AG04450 (cell line): ENCODE measurements at regions of chrX and their contacts with region 1.

Region 1: GRCh38 chrX:41180194-41180908 is 95.1 kb downstream of the USP9X start:
- DNase-seq: peak; percentile 10
- H3K4me3 ChIP-seq: no peak overlapping the region
- H3K27ac ChIP-seq: no peak overlapping the region
- H3K27me3 ChIP-seq: no peaks in the 10 kb centered on the region
- CTCF ChIP-seq: peak; percentile 67

Region 2: DNA sequence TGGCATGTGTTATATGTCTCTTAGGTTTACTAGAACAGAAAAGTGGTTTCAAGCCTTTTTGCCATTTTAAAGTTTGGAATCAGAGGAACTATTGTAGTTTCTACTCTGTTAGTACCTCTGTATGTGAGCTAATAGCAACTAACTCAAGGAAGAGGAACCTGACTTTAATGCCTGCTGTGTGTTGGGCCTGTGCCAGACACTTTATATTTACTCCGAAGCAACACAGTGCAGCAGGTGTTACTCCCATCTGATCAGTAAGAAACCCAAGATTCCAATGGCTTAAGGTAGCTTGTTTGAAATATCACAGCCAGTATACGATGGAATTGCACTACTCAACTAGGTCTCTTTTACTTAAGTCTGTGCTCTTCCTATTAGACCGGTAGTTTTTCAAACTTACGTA is 15.9 kb before region 1 on chrX:
- CTCF ChIA-PET with region 1: interaction called, 40 read pairs
- POLR2A ChIA-PET with region 1: no interaction called
- DNase-seq: no peak
- H3K4me3 ChIP-seq: no peak overlapping the region
- H3K27ac ChIP-seq: no peak overlapping the region
- H3K27me3 ChIP-seq: no peaks in the 10 kb centered on the region
- CTCF ChIP-seq: no peak

Region 3: GRCh38 chrX:41198406-41198805 is 18.1 kb after region 1 on chrX:
- CTCF ChIA-PET with region 1: interaction called, 11 read pairs
- POLR2A ChIA-PET with region 1: no interaction called
- DNase-seq: no peak
- H3K4me3 ChIP-seq: no peak overlapping the region
- H3K27ac ChIP-seq: no peak overlapping the region
- H3K27me3 ChIP-seq: no peaks in the 10 kb centered on the region
- CTCF ChIP-seq: no peak

Region 4: DNA sequence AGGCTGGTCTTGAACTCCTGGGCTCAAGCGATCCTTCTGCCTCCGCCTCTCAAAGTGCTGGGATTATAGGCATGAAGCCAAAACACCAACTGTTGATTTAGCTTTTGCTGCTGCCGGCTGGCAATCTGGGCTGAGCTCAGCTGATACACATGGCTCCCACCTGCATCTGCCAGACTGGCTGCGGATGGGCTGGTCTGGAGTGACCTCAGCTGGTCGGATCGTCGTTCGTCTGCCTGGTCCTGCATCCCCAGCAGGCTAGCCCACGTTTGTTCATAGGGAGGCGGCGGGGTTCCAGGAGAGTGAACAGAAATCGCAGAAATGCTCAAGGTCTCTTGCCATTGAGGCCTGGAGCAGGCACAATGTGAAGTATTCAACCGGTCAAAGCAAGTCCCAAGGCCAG is 79.2 kb after region 1 on chrX:
- CTCF ChIA-PET with region 1: interaction called, 39 read pairs
- POLR2A ChIA-PET with region 1: no interaction called
- DNase-seq: no peak
- H3K4me3 ChIP-seq: no peak overlapping the region
- H3K27ac ChIP-seq: no peak overlapping the region
- H3K27me3 ChIP-seq: no peaks in the 10 kb centered on the region
- CTCF ChIP-seq: no peak